ENCODE measurements at regions of chr4 and their contacts with region 1.

Region 1: DNA sequence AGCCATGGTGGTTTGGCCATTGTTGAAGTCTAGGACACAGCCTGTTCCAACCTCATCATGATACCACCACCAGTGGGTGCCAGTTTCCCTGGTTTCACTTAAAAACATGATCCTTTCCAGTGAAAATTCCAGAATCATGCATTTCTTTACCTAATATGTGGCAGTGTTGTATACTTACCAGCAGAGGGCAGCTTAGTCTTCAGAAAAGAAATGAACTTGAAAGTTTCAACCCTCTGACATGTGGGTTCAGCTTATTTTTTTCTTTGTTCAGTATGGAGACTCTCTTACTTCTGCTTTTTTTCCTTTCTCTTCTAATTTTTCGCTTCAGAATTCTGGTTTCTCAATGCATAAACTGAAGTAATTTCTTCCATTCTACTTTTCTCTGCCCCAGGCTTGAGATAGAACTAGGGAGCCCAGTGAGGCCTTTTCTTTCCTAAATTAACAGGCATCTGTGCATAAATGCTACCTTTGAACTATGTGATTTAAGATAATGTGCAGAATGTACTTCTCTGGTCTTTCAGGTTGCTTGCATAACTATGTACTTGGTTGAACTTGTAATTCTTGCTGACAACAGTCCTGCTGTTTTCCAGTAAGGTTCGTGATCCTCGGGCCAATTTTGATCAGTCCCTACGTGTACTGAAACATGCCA is 10.7 kb downstream of the LIAS start:
- DNase-seq: peak; percentile 89
- ATAC-seq: peak; percentile 93
- H3K4me3 ChIP-seq: no peak overlapping the region
- H3K27ac ChIP-seq: peak overlapping the region; percentile 77
- H3K4me1 ChIP-seq: peaks cover 58% of the 10 kb centered on the region
- H3K27me3 ChIP-seq: no peaks in the 10 kb centered on the region
- CTCF ChIP-seq: peak; percentile 84
- EP300 ChIP-seq: peak in 1 of 2 experiments; percentile 47; a peak in 1 of 4 replicates
- POLR2A ChIP-seq: no peak
- RAD21 ChIP-seq: peak; percentile 91

Region 2: DNA sequence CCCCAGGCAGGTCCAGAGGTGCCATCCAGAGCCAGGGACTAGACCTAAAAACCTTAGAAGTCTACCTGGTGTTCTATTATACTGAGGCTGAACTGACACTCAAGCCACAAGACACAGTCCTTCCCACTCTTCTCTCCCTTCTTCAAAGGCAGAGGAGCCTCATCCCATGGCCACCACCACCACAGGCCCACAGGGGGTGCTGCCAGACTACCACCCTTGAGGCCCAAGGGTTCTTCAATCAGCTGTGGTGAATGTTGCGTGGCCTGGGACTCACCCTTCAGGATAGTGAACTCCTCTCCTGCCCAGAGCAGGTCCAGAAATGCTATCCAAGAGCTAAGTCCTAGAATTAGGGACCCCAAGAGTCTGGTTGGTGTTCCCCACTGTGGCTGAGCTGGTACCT is 85.9 kb before region 1 on chr4:
- CTCF ChIA-PET with region 1: no interaction called
- POLR2A ChIA-PET with region 1: no interaction called
- in situ Hi-C with region 1: no loop called
- intact Hi-C with region 1: no loop called
- DNase-seq: peak; percentile 12
- ATAC-seq: peak; percentile 81
- H3K4me3 ChIP-seq: no peak overlapping the region
- H3K27ac ChIP-seq: no peak overlapping the region
- H3K4me1 ChIP-seq: no peaks in the 10 kb centered on the region
- H3K27me3 ChIP-seq: no peaks in the 10 kb centered on the region
- CTCF ChIP-seq: peak; percentile 53
- EP300 ChIP-seq: no peak
- POLR2A ChIP-seq: no peak
- RAD21 ChIP-seq: no peak

Region 3: DNA sequence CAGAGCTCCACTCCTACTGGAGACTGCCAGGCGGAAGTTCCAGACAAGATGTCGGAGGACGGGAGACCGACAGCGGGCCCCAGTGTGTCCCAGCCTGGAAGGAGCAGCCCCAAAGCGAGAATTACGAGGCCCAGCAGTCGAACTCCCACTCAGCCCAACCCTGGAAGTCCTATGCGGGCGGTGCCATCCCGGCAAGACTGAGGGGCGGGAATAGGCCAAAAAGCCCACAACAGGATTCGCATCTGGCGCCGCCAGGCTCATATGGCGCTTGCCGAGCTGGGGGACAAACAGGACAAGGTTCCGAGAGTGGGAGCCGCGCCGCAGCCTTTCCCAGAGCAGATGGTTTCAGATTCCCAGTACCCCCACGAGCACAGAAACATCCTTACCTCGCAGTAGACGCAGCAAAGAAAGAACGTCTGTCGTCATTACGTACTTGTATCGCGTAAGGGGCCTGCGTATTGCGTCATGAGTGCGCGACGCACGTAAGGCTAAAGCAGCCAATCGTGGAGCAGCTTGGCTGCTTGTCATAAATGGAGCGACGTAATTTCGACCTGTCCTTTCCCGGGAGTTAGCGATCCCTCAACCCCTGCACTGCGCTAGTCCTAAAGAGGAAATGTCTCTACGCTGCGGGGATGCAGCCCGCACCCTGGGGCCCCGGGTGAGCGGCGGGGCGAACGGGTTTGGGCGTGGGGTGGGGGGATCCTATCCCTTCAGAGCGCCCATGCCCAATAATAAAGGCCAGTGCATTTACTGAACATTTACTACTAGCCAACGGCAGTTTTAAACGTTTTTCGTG is 10.8 kb before region 1 on chr4 and contains the starts of genes LIAS and RPL9:
- CTCF ChIA-PET with region 1: no interaction called
- POLR2A ChIA-PET with region 1: interaction called, 17 read pairs
- in situ Hi-C with region 1: no loop called
- intact Hi-C with region 1: no loop called
- DNase-seq: peak; percentile 96
- ATAC-seq: peak; percentile 95
- H3K4me3 ChIP-seq: peak within 1 kb of the TSS; percentile 84 to 97 (median 93)
- H3K27ac ChIP-seq: peak within 1 kb of the TSS; percentile 87
- H3K4me1 ChIP-seq: peaks cover 51% of the 10 kb centered on the region
- H3K27me3 ChIP-seq: no peaks in the 10 kb centered on the region; a peak in 1 of 5 replicates
- CTCF ChIP-seq: no peak
- EP300 ChIP-seq: peak in 1 of 2 experiments; percentile 25; a peak in 1 of 4 replicates
- POLR2A ChIP-seq: peak; percentile 97 to 99
- RAD21 ChIP-seq: no peak; the same call in 1 of the 2 replicates
- total RNA-seq, gene LIAS: 16.6 and 18.3 TPM in 2 replicates
- total RNA-seq, gene RPL9: 2,148 and 2,808 TPM in 2 replicates

Region 4: DNA sequence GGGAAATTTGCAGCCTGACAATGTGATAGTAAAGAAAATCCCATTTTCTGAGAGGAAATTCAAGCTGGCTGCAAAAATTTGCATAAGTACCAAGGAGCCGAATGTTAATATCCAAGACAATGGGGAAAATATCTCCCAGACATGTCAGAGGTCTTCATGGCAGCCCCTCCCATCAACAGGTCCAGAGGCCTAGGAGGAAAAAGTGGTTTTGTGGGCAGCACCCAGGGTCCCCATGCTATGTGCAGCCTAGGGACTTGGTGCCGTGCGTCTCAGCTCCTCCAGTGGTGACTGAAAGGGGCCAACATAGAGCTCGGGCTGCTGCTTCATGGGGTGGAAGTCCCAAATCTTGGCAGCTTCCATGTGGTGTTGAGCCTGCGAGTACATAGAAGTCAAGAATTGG is 64.0 kb after region 1 on chr4:
- CTCF ChIA-PET with region 1: no interaction called
- POLR2A ChIA-PET with region 1: no interaction called
- in situ Hi-C with region 1: no loop called
- intact Hi-C with region 1: no loop called
- DNase-seq: no peak
- ATAC-seq: no peak
- H3K4me3 ChIP-seq: no peak overlapping the region
- H3K27ac ChIP-seq: no peak overlapping the region
- H3K4me1 ChIP-seq: peaks cover 18% of the 10 kb centered on the region
- H3K27me3 ChIP-seq: no peaks in the 10 kb centered on the region; a peak in 1 of 5 replicates
- CTCF ChIP-seq: no peak
- EP300 ChIP-seq: no peak
- POLR2A ChIP-seq: no peak
- RAD21 ChIP-seq: no peak

Region 5: DNA sequence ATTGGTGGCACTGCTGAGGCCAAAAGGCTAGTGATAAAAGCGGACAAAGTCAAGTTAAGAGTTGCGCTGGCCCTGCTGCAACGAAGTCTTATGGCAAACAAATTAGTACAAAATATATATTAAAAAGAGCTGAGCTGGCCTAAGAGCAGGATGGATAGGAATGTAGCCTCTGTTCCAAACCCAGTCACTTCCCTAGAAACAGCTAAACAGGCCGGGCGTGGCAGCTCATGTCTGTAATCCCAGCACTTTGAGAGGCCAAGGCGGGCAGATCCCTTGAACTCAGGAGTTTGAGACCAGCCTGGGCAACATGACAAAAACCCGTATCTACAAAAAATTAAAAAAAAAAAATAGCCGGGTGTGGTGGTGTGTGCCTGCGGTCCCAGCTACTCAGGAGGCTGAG is 90.1 kb after region 1 on chr4:
- CTCF ChIA-PET with region 1: no interaction called
- POLR2A ChIA-PET with region 1: no interaction called
- in situ Hi-C with region 1: no loop called
- intact Hi-C with region 1: loop called (anchors 1 kb)
- DNase-seq: no peak
- ATAC-seq: no peak
- H3K4me3 ChIP-seq: no peak overlapping the region
- H3K27ac ChIP-seq: no peak overlapping the region
- H3K4me1 ChIP-seq: peaks cover 26% of the 10 kb centered on the region
- H3K27me3 ChIP-seq: no peaks in the 10 kb centered on the region; a peak in 1 of 5 replicates
- CTCF ChIP-seq: no peak
- EP300 ChIP-seq: no peak
- POLR2A ChIP-seq: no peak
- RAD21 ChIP-seq: no peak

Region 6: DNA sequence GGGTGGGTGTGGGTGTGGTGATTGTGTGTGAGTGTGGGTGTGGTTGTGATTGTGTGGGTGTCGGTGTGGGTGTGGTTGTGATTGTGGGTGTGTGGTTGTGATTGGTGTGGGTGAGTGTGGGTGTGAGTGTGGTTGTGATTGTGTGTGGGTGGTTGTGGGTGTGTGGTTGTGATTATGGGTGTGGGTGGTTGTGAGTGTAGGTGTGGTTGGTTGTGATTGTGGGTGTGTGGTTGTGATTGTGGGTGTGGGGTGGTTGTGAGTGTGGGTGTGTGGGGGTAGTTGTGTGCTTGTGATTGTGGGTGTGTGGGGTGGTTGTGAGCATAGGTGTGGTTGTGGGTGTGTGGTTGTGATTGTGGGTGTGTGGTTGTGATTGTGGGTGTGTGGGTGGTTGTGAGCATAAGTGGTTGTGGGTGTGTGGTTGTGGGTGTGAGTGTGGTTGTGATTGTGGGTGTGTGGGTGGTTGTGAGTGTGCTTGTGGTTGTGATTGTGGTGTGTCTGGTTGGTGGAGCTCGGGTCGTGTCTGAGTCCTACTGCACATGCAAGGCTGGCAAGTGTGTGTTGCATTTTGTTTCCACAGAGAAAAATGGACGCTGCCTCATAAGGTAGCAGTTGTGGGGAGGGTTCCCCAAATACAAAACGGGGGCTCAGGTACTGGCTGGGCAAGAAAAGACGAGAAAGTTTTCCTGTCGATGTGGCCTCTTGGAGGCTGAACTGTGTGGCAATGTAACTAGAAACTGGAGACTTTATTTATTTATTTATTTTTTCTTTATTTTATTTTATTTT is 345.0 kb after region 1 on chr4:
- CTCF ChIA-PET with region 1: no interaction called
- POLR2A ChIA-PET with region 1: no interaction called
- in situ Hi-C with region 1: no loop called
- intact Hi-C with region 1: loop called (anchors 10 kb)
- DNase-seq: peak; percentile 43
- ATAC-seq: no peak
- H3K4me3 ChIP-seq: peak overlapping the region; percentile 30 to 67 (median 44)
- H3K27ac ChIP-seq: peak overlapping the region; percentile 69
- H3K4me1 ChIP-seq: peaks cover 35% of the 10 kb centered on the region
- H3K27me3 ChIP-seq: no peaks in the 10 kb centered on the region
- CTCF ChIP-seq: no peak
- EP300 ChIP-seq: no peak
- POLR2A ChIP-seq: no peak
- RAD21 ChIP-seq: no peak

Region 7: DNA sequence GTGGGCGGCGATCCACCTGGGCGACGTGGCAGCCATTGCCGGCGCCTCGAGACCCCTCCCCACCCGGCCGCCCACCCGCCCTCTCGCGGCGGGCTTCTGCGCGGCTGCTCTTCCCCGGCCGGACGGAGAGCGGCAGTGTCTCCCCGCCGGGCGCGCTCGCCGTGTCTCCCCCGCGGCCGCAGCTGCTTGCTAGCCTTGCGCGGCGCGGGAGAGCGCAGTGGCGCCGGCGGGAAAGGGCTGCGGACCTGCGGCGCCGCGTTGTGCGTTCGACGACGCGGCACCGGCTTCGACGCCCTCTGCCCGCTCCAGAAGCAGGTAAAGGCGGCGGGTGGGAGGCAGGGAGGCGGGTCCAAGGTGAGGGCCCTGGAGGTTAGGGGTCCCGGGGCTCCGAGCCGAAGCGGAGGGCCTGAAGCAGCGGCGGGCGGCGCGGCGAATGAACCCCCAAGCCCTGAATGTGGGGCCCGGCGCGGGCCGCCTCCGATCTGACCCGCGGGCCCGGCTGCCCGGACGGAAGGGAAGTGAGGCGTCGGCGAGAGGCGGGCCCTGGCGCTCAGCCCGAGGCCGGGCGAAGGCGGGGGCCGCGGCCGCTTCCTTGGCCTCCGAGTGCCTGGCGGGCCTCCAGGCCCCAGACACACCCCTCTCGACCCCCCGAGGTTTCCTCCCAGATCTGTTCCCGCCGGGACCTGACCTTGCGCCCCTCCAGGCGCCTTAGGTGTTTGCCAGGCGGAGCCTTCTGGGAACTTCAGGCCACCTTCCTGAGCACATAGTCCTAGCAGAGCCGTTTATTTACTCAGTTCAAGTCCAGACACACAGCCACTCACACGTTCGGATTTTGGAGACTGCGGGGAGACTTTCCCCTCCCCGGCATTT is 587.4 kb after region 1 on chr4 and contains the start of gene N4BP2:
- CTCF ChIA-PET with region 1: no interaction called
- POLR2A ChIA-PET with region 1: no interaction called
- in situ Hi-C with region 1: no loop called
- intact Hi-C with region 1: loop called (anchors 5 kb)
- DNase-seq: peak; percentile 84
- ATAC-seq: peak; percentile 81
- H3K4me3 ChIP-seq: peak within 1 kb of the TSS; percentile 74 to 86 (median 84)
- H3K27ac ChIP-seq: peak within 1 kb of the TSS; percentile 99
- H3K4me1 ChIP-seq: peaks cover 31% of the 10 kb centered on the region
- H3K27me3 ChIP-seq: no peaks in the 10 kb centered on the region
- CTCF ChIP-seq: peak; percentile 84
- EP300 ChIP-seq: peak; percentile 13 to 71; a peak in 1 of 4 replicates
- POLR2A ChIP-seq: peak; percentile 60 to 64
- RAD21 ChIP-seq: peak; percentile 90
- total RNA-seq, gene N4BP2: 12.9 and 22.8 TPM in 2 replicates